Calu3 (cell line): ENCODE measurements at regions of chr2 and their contacts with region 1.

Region 1: GRCh38 chr2:153761936-153762335 is 109.8 kb upstream of the GALNT13 start:
- DNase-seq: no peak
- H3K4me3 Mint-ChIP-seq: no peak overlapping the region
- H3K27ac Mint-ChIP-seq: no peak overlapping the region
- H3K4me1 Mint-ChIP-seq: no peaks in the 10 kb centered on the region
- H3K27me3 Mint-ChIP-seq: no peaks in the 10 kb centered on the region
- CTCF ChIP-seq: no peak

Region 2: DNA sequence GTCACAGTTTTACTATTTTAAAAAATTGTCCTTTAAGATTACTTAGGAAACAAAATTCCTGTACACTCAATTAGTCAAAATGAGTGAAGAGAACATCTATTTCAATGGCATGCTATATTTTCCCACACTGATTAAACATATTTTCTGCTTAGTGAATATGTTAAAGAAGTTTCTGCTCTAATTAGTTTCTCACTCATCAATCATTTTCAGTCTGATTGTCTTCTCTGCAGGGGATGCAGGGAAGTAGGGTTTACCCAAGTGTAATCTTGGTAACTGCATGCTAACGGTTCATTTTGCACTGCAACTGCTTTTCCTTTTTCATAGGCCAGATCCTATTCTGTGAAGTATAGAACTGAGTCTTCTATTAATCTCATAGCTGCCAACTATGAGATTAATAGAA is 965.0 kb before region 1 on chr2:
- CTCF ChIA-PET with region 1: no interaction called
- intact Hi-C with region 1: loop called (anchors 5 kb)
- DNase-seq: no peak
- H3K4me3 Mint-ChIP-seq: no peak overlapping the region
- H3K27ac Mint-ChIP-seq: no peak overlapping the region
- H3K4me1 Mint-ChIP-seq: no peaks in the 10 kb centered on the region
- H3K27me3 Mint-ChIP-seq: no peaks in the 10 kb centered on the region
- CTCF ChIP-seq: no peak

Region 3: GRCh38 chr2:153912798-153913396 is 151.0 kb after region 1 on chr2:
- CTCF ChIA-PET with region 1: no interaction called
- intact Hi-C with region 1: no loop called
- DNase-seq: no peak
- H3K4me3 Mint-ChIP-seq: no peak overlapping the region
- H3K27ac Mint-ChIP-seq: no peak overlapping the region
- H3K4me1 Mint-ChIP-seq: no peaks in the 10 kb centered on the region
- H3K27me3 Mint-ChIP-seq: no peaks in the 10 kb centered on the region
- CTCF ChIP-seq: no peak